ENCODE measurements at regions of chr9 and their contacts with region 1.

Region 1: DNA sequence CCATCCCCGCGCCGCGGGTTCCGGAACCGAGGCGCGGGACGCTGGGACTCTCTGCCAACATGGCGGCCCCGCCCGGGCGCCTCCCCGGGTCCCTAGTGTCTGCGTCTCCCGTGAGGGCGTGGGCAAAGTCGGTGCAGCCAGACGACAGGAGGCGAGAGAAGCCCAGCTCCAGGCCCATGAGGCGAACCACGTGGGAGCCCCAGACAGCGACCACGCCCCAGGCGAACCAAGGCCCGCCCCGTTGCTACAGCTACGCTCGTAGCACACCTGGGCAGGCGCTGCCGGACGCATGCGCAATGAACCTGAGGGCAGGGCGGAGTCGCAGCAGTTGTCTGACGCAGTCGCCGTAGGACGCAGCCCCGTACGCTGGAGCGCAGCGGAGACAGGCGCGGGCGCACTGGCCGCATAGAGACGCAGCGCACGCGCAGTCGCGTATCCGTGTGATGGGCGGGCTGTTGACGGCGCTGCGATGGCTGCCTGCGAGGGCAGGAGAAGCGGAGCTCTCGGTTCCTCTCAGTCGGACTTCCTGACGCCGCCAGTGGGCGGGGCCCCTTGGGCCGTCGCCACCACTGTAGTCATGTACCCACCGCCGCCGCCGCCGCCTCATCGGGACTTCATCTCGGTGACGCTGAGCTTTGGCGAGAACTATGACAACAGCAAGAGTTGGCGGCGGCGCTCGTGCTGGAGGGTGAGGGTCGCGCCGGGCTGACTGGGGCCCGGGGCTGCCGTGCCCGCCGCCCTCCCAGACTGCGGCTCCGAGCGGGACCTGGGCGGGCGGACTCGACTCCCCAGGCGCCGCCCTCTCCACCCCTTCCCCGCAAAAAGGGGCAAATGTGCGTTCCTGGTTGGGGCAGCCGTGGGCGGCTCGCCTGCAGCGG is at the start of gene MAN1B1:
- DNase-seq: peak; percentile 99
- ATAC-seq: peak; percentile 93 to 94
- H3K4me3 ChIP-seq: peak within 1 kb of the TSS; percentile 67 to 92 (median 78)
- H3K27ac ChIP-seq: peak within 1 kb of the TSS; percentile 91 to 96 (median 92)
- H3K4me1 ChIP-seq: peaks cover 18 to 21% of the 10 kb centered on the region in 2 donors
- H3K27me3 ChIP-seq: no peaks in the 10 kb centered on the region
- CTCF ChIP-seq: peak in 1 of 5 experiments; percentile 23
- POLR2A ChIP-seq: peak; percentile 82 to 83
- total RNA-seq, gene MAN1B1: 15.9 to 31.9 (median 21.1) TPM

Region 2: GRCh38 chr9:137114610-137115391 is 28.0 kb after region 1 on chr9 and contains the start of gene DPP7:
- in situ Hi-C with region 1: no loop called
- intact Hi-C with region 1: loop called (anchors 2 kb)
- DNase-seq: peak; percentile 53 to 67
- ATAC-seq: peak; percentile 91 to 93
- H3K4me3 ChIP-seq: peak within 1 kb of the TSS; percentile 76 to 97 (median 92)
- H3K27ac ChIP-seq: peak within 1 kb of the TSS; percentile 50 to 72 (median 64)
- H3K4me1 ChIP-seq: peaks cover 6 to 9% of the 10 kb centered on the region in 2 donors
- H3K27me3 ChIP-seq: no peaks in the 10 kb centered on the region
- CTCF ChIP-seq: peak in 1 of 5 experiments; percentile 22
- POLR2A ChIP-seq: peak; percentile 51 to 52
- total RNA-seq, gene DPP7: 36.9 to 63.1 (median 55.9) TPM

Region 3: GRCh38 chr9:137295238-137295811 is 208.6 kb after region 1 on chr9:
- in situ Hi-C with region 1: no loop called
- intact Hi-C with region 1: no loop called
- DNase-seq: no peak
- ATAC-seq: peak in 1 of 2 donors; percentile 49
- H3K4me3 ChIP-seq: peak overlapping the region in 2 of 4 donors; percentile 41 to 44
- H3K27ac ChIP-seq: peak overlapping the region in 1 of 4 donors; percentile 81
- H3K4me1 ChIP-seq: peaks cover 0 to 5% of the 10 kb centered on the region in 2 donors
- H3K27me3 ChIP-seq: peaks cover 63 to 70% (median 69%) of the 10 kb centered on the region in 3 donors
- CTCF ChIP-seq: peak in 4 of 5 experiments; percentile 69 to 90 (median 81)
- POLR2A ChIP-seq: no peak